ENCODE measurements at regions of chr15 and their contacts with region 1.

Region 1: DNA sequence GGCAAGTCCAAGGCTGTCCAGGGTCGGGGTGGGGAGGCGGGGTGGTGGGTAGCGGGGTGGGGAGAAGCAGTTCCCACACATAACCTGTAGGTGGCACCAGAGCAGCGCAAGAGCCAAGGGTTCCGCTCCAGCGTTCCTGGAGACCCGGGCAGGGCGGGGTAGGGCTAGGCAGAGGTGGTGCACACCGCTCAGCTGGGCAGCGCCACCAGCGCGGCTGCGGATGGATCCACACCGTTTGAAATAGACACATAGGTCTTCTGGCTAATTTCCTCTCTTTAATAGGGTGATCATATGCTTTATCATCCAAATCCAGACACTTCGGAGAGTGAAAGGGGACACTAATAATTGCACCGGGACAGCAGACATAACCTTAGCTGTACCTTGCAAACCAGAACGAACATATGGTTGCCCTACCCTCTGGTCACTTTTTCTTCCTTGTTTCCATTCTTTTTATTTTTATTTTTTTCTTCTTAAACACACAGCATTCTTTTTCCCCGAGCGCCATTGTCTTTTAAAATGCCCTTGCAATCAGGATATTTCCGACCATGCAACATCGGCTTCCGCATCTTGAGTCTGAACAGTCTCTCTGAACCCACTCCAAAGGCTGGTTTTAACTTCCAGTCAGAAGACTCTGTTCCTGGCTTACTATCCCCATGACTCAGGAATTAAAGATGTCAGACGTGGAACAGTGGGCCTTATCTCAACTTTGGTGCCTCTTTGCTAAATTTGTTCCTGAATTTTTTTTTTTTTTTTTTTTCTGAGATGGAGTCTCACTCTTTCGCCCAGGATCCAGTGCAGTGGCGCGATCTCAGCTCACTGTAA is 12.5 kb upstream of the ZSCAN2 start:
- DNase-seq: peak; percentile 64
- ATAC-seq: peak; percentile 100
- H3K4me3 ChIP-seq: peak overlapping the region; percentile 36; the same call in 1 of the 2 replicates
- H3K27ac ChIP-seq: no peak overlapping the region
- H3K4me1 ChIP-seq: no peaks in the 10 kb centered on the region
- H3K27me3 ChIP-seq: peaks cover 4% of the 10 kb centered on the region
- CTCF ChIP-seq: peak; percentile 68
- POLR2A ChIP-seq: no peak
- RAD21 ChIP-seq: peak; percentile 84

Region 2: GRCh38 chr15:84633311-84634227 is 45.3 kb after region 1 on chr15:
- CTCF ChIA-PET with region 1: interaction called, 3 read pairs
- POLR2A ChIA-PET with region 1: no interaction called
- dilution Hi-C with region 1: no loop called
- in situ Hi-C with region 1: no loop called
- intact Hi-C with region 1: loop called (anchors 10 kb)
- DNase-seq: peak; percentile 67
- ATAC-seq: peak; percentile 71
- H3K4me3 ChIP-seq: peak overlapping the region; percentile 62
- H3K27ac ChIP-seq: peak overlapping the region; percentile 76
- H3K4me1 ChIP-seq: peaks cover 11% of the 10 kb centered on the region
- H3K27me3 ChIP-seq: no peaks in the 10 kb centered on the region
- CTCF ChIP-seq: no peak
- POLR2A ChIP-seq: no peak; the same call in 1 of the 2 replicates
- RAD21 ChIP-seq: no peak

Region 3: DNA sequence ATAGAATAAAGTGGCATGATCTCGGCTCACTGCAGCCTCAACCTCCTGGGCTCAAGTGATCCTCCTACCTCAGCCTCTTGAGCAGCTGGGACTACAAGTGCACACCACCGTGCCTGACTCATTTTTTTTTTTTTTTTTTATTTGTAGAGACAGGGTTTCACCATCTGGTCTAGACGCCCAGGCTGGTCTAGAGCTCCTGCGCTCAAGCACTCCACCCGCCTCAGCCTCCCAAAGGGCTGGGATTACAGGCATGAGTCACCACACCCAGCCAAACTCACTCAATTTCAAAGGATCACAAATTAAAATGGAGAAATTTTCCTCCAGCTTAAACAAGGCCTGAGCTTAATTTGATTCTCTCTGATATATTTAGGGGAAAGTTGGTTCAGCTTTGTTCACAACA is 97.0 kb after region 1 on chr15:
- CTCF ChIA-PET with region 1: no interaction called
- POLR2A ChIA-PET with region 1: no interaction called
- dilution Hi-C with region 1: no loop called
- in situ Hi-C with region 1: no loop called
- intact Hi-C with region 1: no loop called
- DNase-seq: peak; percentile 82
- ATAC-seq: peak; percentile 92
- H3K4me3 ChIP-seq: no peak overlapping the region
- H3K27ac ChIP-seq: no peak overlapping the region
- H3K4me1 ChIP-seq: no peaks in the 10 kb centered on the region
- H3K27me3 ChIP-seq: no peaks in the 10 kb centered on the region
- CTCF ChIP-seq: no peak
- POLR2A ChIP-seq: no peak
- RAD21 ChIP-seq: no peak

Region 4: DNA sequence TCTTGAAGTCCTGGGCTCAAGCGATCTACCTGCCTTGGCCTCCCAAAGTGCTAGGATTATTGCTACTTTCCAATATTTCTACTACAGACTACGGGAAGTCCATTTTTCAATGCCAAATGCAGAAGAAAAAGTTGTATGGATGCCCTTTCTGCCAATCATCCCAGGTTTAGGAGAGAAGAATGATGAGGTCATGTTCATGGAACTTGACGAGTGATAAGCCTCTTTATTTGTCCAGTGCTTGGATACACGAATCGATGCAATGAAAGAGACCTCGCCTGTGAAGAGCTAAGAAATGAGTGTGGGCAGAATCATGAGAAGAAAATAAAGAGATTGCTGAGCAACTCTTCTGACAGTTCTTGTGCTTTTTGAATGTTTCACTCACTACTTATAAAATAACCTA is 295.2 kb after region 1 on chr15:
- CTCF ChIA-PET with region 1: no interaction called
- POLR2A ChIA-PET with region 1: no interaction called
- dilution Hi-C with region 1: no loop called
- in situ Hi-C with region 1: no loop called
- intact Hi-C with region 1: loop called (anchors 2 kb)
- DNase-seq: no peak
- ATAC-seq: no peak
- H3K4me3 ChIP-seq: no peak overlapping the region
- H3K27ac ChIP-seq: no peak overlapping the region
- H3K4me1 ChIP-seq: no peaks in the 10 kb centered on the region
- H3K27me3 ChIP-seq: peaks cover 34% of the 10 kb centered on the region
- CTCF ChIP-seq: no peak
- POLR2A ChIP-seq: no peak
- RAD21 ChIP-seq: no peak

Region 5: DNA sequence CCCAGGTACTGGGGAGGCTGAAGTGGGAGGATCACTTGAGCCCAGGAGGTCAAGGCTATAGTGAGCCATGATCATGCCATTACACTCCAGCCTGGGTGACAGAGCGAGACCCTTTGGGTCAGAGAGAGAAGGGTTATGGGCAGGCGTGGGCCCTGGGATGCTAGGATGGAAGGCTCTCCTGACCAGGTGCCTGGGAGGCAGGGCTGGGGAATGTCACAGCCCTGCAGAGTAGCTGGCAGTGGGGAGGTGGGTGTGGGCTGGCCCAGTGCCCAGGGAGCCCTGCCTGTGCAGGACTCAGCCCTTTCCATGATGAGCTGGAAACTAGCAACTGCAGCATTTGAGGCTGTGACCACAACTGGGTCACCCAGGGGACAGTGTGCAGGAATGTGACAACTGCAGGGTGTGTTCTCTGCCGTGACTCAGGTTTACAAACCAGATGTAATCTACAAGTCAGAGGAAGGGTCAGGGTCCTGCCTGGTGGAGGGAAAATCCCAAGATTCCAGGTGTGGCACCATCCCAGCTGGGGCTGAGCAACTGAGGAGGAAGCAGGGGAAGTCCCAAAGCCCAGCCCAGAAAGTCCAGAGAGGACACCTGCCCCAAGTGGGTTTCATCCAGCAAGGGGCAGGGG is 341.6 kb after region 1 on chr15:
- CTCF ChIA-PET with region 1: interaction called, 3 read pairs
- POLR2A ChIA-PET with region 1: no interaction called
- dilution Hi-C with region 1: no loop called
- in situ Hi-C with region 1: loop called (anchors 5 kb)
- intact Hi-C with region 1: loop called (anchors 1 kb)
- DNase-seq: peak; percentile 72
- ATAC-seq: no peak
- H3K4me3 ChIP-seq: no peak overlapping the region
- H3K27ac ChIP-seq: no peak overlapping the region
- H3K4me1 ChIP-seq: peaks cover 2% of the 10 kb centered on the region
- H3K27me3 ChIP-seq: no peaks in the 10 kb centered on the region
- CTCF ChIP-seq: no peak
- POLR2A ChIP-seq: no peak
- RAD21 ChIP-seq: no peak

Region 6: GRCh38 chr15:85044251-85044853 is 456.1 kb after region 1 on chr15:
- CTCF ChIA-PET with region 1: no interaction called
- POLR2A ChIA-PET with region 1: no interaction called
- dilution Hi-C with region 1: no loop called
- in situ Hi-C with region 1: no loop called
- intact Hi-C with region 1: loop called (anchors 10 kb)
- DNase-seq: peak; percentile 80
- ATAC-seq: peak; percentile 67
- H3K4me3 ChIP-seq: no peak overlapping the region
- H3K27ac ChIP-seq: no peak overlapping the region
- H3K4me1 ChIP-seq: peaks cover 4% of the 10 kb centered on the region
- H3K27me3 ChIP-seq: no peaks in the 10 kb centered on the region
- CTCF ChIP-seq: peak; percentile 75
- POLR2A ChIP-seq: no peak
- RAD21 ChIP-seq: peak; percentile 82

Region 7: DNA sequence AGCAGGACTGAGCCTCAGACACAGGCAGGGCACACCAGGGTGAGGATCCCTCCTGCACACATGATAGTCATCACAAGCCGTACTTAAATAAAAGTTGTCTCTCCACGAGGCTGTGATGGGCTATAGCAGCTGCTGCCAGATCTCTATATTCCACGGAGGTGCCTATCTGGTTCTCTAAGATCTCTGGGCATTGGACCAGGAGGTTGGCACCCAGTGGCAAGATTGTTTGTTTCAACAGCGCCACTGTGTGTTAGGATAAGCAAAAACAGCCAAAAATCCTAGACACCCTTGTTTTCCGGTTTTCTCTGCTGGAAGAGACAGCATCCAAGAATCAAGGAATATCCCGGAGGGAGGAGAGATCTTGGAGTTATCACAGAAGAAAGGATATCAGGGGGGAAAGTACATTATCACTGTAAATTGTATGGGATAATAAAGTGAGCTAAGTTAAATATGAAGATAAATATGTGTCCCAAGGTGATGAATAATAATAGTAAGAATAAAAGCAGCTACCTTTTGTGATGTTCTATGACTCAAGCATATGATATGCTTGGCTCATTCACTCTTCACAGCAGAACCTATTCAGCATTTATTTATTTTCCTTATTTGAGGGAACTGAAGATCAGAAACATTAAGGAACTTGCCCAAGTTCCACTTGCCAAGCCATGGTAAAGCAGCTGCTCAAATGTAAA is 701.6 kb after region 1 on chr15:
- CTCF ChIA-PET with region 1: no interaction called
- POLR2A ChIA-PET with region 1: no interaction called
- dilution Hi-C with region 1: no loop called
- in situ Hi-C with region 1: no loop called
- intact Hi-C with region 1: loop called (anchors 10 kb)
- DNase-seq: peak; percentile 31
- ATAC-seq: peak; percentile 59
- H3K4me3 ChIP-seq: no peak overlapping the region
- H3K27ac ChIP-seq: no peak overlapping the region
- H3K4me1 ChIP-seq: no peaks in the 10 kb centered on the region
- H3K27me3 ChIP-seq: peaks cover 3% of the 10 kb centered on the region; the same call in 1 of the 2 replicates
- CTCF ChIP-seq: peak; percentile 59
- POLR2A ChIP-seq: no peak
- RAD21 ChIP-seq: peak; percentile 58; the same call in 1 of the 2 replicates